ENCODE measurements at regions of chr20 and their contacts with region 1.

Region 1: DNA sequence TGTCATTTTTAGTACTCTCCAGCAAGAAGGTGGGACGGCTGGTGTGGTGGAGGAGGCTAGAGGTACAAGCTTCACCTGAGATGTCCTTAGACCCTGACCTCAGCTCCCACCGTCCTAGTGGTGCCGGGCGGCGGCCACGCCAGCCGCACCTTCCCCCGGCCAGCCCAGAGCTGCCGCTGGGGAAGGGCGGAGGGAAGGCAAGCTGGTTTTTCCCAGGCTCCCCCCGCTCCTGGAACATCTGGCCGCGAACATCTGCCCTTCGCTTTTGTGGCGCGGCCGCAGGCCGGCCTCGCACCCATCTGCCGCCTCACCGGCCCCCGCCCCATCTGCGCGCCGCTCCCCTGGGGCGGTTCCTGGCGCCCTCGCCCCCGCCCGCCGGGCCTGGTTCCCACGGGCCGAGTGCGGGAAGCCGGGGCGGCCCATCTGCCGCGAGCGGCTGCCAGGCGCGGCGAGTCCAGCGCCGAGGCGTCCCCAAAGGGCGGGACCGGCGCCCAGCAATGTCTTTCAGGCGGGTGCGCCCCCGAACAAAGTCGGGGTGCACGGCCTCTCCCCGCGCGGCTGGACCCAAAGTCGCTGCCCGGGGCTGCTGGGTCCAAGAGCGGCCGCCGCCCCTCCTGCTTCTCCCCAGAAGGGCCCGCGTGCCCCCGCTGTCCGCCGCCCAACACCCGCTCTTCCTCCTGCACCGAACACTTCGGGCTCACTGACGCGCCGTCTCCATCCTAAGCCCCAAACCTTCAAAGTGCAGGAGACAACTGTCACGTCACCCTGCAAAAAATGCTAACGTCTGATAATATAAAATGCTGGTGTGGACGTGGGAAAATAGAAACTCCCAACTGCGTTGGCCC is 17.3 kb upstream of the ID1 start:
- DNase-seq: no peak
- ATAC-seq: peak; percentile 61
- H3K4me3 ChIP-seq: peak overlapping the region; percentile 68
- H3K27ac ChIP-seq: no peak overlapping the region
- H3K4me1 ChIP-seq: peaks cover 21% of the 10 kb centered on the region
- H3K27me3 ChIP-seq: no peaks in the 10 kb centered on the region
- CTCF ChIP-seq: no peak

Region 2: DNA sequence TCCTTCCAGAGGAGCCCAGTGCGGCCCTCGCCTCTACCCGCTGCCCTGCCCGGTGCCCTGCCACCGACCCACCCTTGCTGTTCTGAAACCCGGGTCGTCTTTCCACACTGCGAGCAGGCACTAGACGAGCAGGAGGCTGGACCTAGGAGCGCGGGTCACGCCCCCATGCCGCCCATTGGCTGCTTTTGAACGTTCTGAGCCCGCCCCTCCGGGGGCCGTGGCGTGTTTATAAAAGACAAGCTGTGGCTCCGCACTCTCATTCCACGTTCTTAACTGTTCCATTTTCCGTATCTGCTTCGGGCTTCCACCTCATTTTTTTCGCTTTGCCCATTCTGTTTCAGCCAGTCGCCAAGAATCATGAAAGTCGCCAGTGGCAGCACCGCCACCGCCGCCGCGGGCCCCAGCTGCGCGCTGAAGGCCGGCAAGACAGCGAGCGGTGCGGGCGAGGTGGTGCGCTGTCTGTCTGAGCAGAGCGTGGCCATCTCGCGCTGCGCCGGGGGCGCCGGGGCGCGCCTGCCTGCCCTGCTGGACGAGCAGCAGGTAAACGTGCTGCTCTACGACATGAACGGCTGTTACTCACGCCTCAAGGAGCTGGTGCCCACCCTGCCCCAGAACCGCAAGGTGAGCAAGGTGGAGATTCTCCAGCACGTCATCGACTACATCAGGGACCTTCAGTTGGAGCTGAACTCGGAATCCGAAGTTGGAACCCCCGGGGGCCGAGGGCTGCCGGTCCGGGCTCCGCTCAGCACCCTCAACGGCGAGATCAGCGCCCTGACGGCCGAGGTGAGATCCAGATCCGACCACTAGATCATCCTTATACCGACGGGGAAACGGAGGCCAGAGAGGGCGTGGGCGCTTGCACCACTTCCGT is 17.5 kb after region 1 on chr20 and contains the start of gene ID1:
- CTCF ChIA-PET with region 1: interaction called, 11 read pairs
- POLR2A ChIA-PET with region 1: interaction called, 34 read pairs
- intact Hi-C with region 1: no loop called
- DNase-seq: peak; percentile 97
- ATAC-seq: peak; percentile 49
- H3K4me3 ChIP-seq: peak within 1 kb of the TSS; percentile 97
- H3K27ac ChIP-seq: peak within 1 kb of the TSS; percentile 69
- H3K4me1 ChIP-seq: peaks cover 57% of the 10 kb centered on the region
- H3K27me3 ChIP-seq: no peaks in the 10 kb centered on the region
- CTCF ChIP-seq: no peak
- total RNA-seq, gene ID1: 774 and 872 TPM in 2 replicates

Measured in PC-3 (cell line).